ENCODE measurements at regions of chr4 and their contacts with region 1.

Region 1: GRCh38 chr4:3480528-3481112 is 17.5 kb downstream of the DOK7 start:
- DNase-seq: peak; percentile 81
- ATAC-seq: peak; percentile 47
- H3K4me3 Mint-ChIP-seq: no peak overlapping the region
- H3K27ac Mint-ChIP-seq: no peak overlapping the region
- H3K4me1 Mint-ChIP-seq: peaks cover 39% of the 10 kb centered on the region
- H3K27me3 Mint-ChIP-seq: peaks cover 2% of the 10 kb centered on the region
- CTCF ChIP-seq: peak; percentile 80

Region 2: GRCh38 chr4:2732991-2733868 is 747.4 kb before region 1 on chr4:
- CTCF ChIA-PET with region 1: no interaction called
- POLR2A ChIA-PET with region 1: no interaction called
- intact Hi-C with region 1: no loop called
- DNase-seq: no peak
- ATAC-seq: no peak
- H3K4me3 Mint-ChIP-seq: no peak overlapping the region
- H3K27ac Mint-ChIP-seq: no peak overlapping the region
- H3K4me1 Mint-ChIP-seq: peaks cover 11% of the 10 kb centered on the region
- H3K27me3 Mint-ChIP-seq: no peaks in the 10 kb centered on the region
- CTCF ChIP-seq: no peak

Region 3: GRCh38 chr4:3257556-3258482 is 222.8 kb before region 1 on chr4:
- CTCF ChIA-PET with region 1: no interaction called
- POLR2A ChIA-PET with region 1: no interaction called
- intact Hi-C with region 1: loop called (anchors 2 kb)
- DNase-seq: peak; percentile 44
- ATAC-seq: peak; percentile 72
- H3K4me3 Mint-ChIP-seq: peak overlapping the region; percentile 50
- H3K27ac Mint-ChIP-seq: peak overlapping the region; percentile 73
- H3K4me1 Mint-ChIP-seq: peaks cover 24% of the 10 kb centered on the region
- H3K27me3 Mint-ChIP-seq: no peaks in the 10 kb centered on the region
- CTCF ChIP-seq: no peak

Region 4: DNA sequence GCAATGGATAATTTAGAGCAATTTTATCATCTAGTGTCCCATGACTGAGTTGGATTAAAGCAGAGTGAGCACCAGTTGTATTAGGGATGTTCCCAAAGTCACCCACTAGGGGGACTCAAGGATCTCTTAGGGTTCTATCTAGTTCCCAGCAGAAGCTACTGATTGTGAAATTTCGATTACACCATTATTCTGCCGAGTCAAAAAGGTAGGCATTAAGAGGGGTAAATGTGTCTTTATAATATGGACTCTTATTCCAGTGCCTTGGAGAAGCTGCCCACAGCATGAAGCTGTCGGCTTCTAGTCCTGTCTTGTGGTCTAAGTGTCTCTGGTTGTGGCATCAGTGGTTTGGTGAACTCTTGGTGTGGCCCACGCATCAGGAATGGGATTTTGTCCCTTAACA is 134.5 kb before region 1 on chr4:
- CTCF ChIA-PET with region 1: interaction called, 26 read pairs
- POLR2A ChIA-PET with region 1: no interaction called
- intact Hi-C with region 1: loop called (anchors 1 kb)
- DNase-seq: no peak
- ATAC-seq: peak; percentile 99
- H3K4me3 Mint-ChIP-seq: no peak overlapping the region
- H3K27ac Mint-ChIP-seq: no peak overlapping the region
- H3K4me1 Mint-ChIP-seq: peaks cover 4% of the 10 kb centered on the region
- H3K27me3 Mint-ChIP-seq: no peaks in the 10 kb centered on the region
- CTCF ChIP-seq: peak; percentile 18

Region 5: GRCh38 chr4:3369781-3370674 is 110.6 kb before region 1 on chr4:
- CTCF ChIA-PET with region 1: no interaction called
- POLR2A ChIA-PET with region 1: interaction called, 3 read pairs
- intact Hi-C with region 1: loop called (anchors 1 kb)
- DNase-seq: no peak
- ATAC-seq: no peak
- H3K4me3 Mint-ChIP-seq: peak overlapping the region; percentile 64
- H3K27ac Mint-ChIP-seq: no peak overlapping the region
- H3K4me1 Mint-ChIP-seq: peaks cover 38% of the 10 kb centered on the region
- H3K27me3 Mint-ChIP-seq: peaks cover 11% of the 10 kb centered on the region
- CTCF ChIP-seq: no peak

Region 6: GRCh38 chr4:3531879-3532713 is 51.5 kb after region 1 on chr4 and contains the start of gene LRPAP1:
- CTCF ChIA-PET with region 1: no interaction called
- POLR2A ChIA-PET with region 1: no interaction called
- intact Hi-C with region 1: loop called (anchors 1 kb)
- DNase-seq: peak; percentile 91
- ATAC-seq: peak; percentile 89
- H3K4me3 Mint-ChIP-seq: peak within 1 kb of the TSS; percentile 99
- H3K27ac Mint-ChIP-seq: peak within 1 kb of the TSS; percentile 94
- H3K4me1 Mint-ChIP-seq: peaks cover 42% of the 10 kb centered on the region
- H3K27me3 Mint-ChIP-seq: no peaks in the 10 kb centered on the region
- CTCF ChIP-seq: no peak
- total RNA-seq, gene LRPAP1: 60.9 and 62.9 TPM in 2 replicates